ENCODE measurements at regions of chr3 and their contacts with region 1.

Region 1: GRCh38 chr3:89690646-89691045 is 583.2 kb downstream of the EPHA3 start:
- DNase-seq: no peak
- H3K4me3 ChIP-seq: no peak overlapping the region
- H3K27ac ChIP-seq: no peak overlapping the region
- H3K4me1 ChIP-seq: no peaks in the 10 kb centered on the region
- H3K27me3 ChIP-seq: no peaks in the 10 kb centered on the region
- CTCF ChIP-seq: no peak
- POLR2A ChIP-seq: no peak

Region 2: GRCh38 chr3:88469216-88469615 is 1221.4 kb before region 1 on chr3:
- intact Hi-C with region 1: loop called (anchors 5 kb)
- DNase-seq: no peak
- H3K4me3 ChIP-seq: no peak overlapping the region
- H3K27ac ChIP-seq: no peak overlapping the region
- H3K4me1 ChIP-seq: no peaks in the 10 kb centered on the region
- H3K27me3 ChIP-seq: no peaks in the 10 kb centered on the region
- CTCF ChIP-seq: no peak
- POLR2A ChIP-seq: no peak

Region 3: DNA sequence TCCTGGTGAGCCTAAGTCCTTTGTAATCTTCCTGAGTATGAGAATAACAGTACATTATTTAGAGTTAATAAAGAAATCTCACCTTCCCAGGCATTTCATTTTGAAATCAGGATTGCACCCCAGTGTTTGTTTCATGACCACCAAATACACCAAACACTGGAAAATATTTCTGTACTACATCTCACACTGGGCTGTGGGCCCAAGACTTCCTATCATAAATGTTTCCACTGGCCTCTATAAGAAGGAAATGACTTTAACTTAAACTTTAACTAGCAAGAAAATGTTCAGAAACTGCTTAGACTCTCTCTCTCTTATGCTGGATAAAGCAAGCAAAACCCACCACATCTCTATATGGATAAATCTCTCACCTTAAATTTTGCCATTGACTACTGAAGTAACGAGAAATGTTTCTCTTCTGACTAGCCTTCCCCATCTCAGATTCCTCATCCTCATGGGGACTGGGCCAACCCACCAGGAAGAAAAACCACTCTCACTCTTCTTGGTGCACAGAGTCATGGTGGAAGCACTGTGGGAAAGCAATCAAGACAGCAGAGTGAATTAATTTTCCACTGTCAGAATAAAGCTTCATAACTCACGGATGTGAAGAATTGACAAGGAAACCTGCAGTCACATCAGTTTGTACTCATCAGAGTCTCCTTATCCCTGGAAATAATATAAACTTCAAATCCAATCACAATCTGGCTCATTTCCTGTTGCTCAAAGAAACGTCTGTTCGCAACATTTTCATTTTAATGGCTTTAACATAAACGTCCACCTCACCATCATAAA is 276.4 kb after region 1 on chr3:
- intact Hi-C with region 1: no loop called
- DNase-seq: no peak
- H3K4me3 ChIP-seq: no peak overlapping the region
- H3K27ac ChIP-seq: no peak overlapping the region
- H3K4me1 ChIP-seq: no peaks in the 10 kb centered on the region
- H3K27me3 ChIP-seq: no peaks in the 10 kb centered on the region
- CTCF ChIP-seq: no peak
- POLR2A ChIP-seq: no peak